ENCODE measurements at regions of chr1 and their contacts with region 1.

Region 1: GRCh38 chr1:153510984-153511410 is 24.8 kb downstream of the S100A6 start:
- DNase-seq: peak; percentile 76

Region 2: GRCh38 chr1:152725261-152725660 is 785.7 kb before region 1 on chr1:
- in situ Hi-C with region 1: no loop called
- DNase-seq: no peak

Region 3: GRCh38 chr1:153568367-153569099 is 57.5 kb after region 1 on chr1:
- in situ Hi-C with region 1: loop called (anchors 10 kb)
- DNase-seq: peak; percentile 92

Region 4: GRCh38 chr1:153775458-153776327 is 264.7 kb after region 1 on chr1:
- in situ Hi-C with region 1: loop called (anchors 10 kb)
- DNase-seq: peak; percentile 65

Measured in KBM-7 (cell line).